ENCODE measurements at regions of chr12 and their contacts with region 1.

Region 1: DNA sequence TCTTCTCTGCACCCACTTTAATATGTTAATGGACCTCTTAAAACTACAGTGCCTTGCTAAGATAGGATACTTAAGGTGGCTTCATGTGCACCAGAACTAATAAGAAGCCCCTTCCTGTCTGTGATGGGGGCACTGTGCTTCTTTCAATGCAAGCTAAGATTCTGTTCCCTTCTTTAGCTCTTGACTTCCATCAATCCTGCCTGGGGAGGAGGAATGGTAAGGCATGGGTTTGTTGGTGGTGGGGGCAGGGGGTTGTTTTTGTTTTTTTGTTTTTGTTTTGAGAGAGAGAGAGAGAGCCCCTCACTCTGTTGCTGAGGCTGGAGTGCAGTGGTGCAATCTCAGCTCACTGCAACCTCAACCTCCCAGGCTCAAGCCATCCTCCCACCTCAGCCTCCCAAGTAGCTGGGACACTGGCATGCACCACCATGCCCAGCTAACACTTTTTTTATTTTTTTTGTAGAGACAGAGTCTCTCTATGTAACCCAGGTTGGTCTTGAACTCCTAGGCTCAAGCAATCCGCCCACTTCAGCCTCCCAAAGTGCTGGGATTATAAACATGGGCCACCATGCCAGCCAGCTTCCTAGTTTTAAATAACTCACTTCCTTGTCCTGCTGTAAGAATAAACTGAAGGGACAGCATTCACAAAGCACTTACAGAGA is 4.5 kb upstream of the KRT3 start:
- DNase-seq: no peak
- H3K4me3 ChIP-seq: no peak overlapping the region
- H3K27ac ChIP-seq: no peak overlapping the region
- H3K4me1 ChIP-seq: peaks cover 0 to 14% (median 5%) of the 10 kb centered on the region in 4 experiments; a peak in 6 of 7 replicates
- H3K27me3 ChIP-seq: no peaks in the 10 kb centered on the region
- CTCF ChIP-seq: no peak
- EP300 ChIP-seq: no peak
- POLR2A ChIP-seq: no peak
- RAD21 ChIP-seq: no peak

Region 2: GRCh38 chr12:52473768-52474167 is 326.6 kb before region 1 on chr12 and contains the start of gene KRT6C:
- CTCF ChIA-PET with region 1: no interaction called
- POLR2A ChIA-PET with region 1: no interaction called
- DNase-seq: no peak
- H3K4me3 ChIP-seq: no peak within 1 kb of the TSS
- H3K27ac ChIP-seq: no peak within 1 kb of the TSS
- H3K4me1 ChIP-seq: no peaks in the 10 kb centered on the region
- H3K27me3 ChIP-seq: no peaks in the 10 kb centered on the region
- CTCF ChIP-seq: no peak
- EP300 ChIP-seq: no peak
- POLR2A ChIP-seq: no peak
- RAD21 ChIP-seq: no peak
- total RNA-seq, gene KRT6C: not detected in 2 replicates

Region 3: DNA sequence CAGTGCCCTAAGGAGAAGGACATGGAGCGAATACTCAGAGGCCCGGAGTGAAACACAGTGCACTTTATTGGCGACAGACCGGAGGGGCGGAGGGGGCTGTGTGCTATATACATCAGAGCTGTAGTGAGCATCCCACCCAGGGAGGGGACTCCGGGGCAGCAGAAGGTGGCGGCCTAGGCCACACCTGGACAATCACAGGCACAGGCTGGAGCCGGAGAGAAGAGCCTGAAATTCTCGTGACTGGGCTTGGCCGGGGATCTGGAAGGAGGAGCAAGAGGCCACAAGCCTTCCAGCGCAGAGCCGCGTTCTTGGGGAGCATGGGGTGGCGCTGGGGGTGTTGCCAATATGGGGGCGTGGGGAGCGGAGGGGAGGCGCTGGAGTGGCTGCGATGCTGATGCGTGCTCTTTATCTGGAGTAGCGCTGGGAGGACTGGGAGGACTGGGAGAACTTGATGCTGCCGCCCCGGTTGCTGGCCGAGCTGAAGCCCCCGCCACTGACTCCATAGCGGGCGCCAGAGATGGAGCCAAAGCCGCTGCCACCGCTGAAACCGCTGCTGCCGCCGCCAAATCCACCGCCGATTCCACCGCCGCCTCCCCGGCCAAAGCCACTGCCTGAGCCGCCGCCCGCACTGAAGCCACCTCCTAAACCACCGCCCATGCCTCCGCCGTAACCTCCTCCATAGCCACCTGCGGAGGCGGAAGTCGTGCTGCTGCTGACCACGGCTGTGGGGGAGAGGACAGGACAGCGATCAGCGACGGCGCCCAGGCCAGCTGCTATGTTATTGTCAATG is 10.6 kb before region 1 on chr12:
- CTCF ChIA-PET with region 1: interaction called, 20 read pairs
- POLR2A ChIA-PET with region 1: interaction called, 3 read pairs
- DNase-seq: no peak
- H3K4me3 ChIP-seq: no peak overlapping the region
- H3K27ac ChIP-seq: no peak overlapping the region
- H3K4me1 ChIP-seq: no peaks in the 10 kb centered on the region
- H3K27me3 ChIP-seq: no peaks in the 10 kb centered on the region
- CTCF ChIP-seq: no peak
- EP300 ChIP-seq: no peak
- POLR2A ChIP-seq: no peak
- RAD21 ChIP-seq: no peak